Posterior vena cava (tissue), 2 donors: ENCODE measurements at regions of chr19 and their contacts with region 1.

Region 1: DNA sequence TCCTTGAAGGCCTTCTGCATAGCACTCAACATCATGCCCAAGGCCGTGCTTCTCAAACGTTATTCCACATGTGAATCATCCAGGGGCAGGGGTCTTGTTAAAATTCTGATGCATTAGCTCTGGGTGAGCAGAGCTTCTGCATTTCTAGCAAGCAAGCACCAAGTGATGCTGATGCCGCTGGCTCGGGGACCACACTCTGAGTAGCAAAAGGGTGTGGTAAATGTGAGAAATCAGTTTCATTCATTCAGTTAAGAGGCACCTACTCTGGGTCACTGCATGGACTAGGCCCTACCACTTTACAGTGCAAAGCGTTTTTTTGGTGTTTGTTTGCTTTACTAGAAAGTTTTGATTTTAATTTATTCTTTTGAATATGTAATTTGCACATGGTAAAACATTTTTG is 7.2 kb downstream of the KRTDAP start:
- DNase-seq: peak; percentile 31

Region 2: DNA sequence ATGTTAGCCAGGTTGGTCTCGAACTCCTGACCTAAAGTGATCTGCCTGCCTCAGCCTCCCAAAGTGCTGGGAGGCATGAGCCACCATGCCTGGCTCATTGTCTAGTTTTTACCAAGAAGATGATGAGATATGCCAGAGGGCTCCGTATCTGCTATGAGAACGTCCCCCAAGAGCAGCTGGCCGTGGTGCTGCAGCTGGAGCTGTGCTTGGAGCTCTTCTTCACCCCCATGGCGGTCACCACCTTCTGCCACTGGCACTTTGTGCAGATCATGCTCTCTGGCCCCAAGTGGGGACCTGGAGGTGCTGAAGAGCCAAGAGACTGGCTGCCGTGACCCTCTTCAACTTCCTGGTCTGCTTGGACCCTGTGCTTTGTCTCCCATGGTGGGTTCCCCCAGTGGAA is 75.5 kb before region 1 on chr19:
- intact Hi-C with region 1: loop called in 1 of 2 experiments (anchors 2 kb)
- DNase-seq: peak; percentile 60

Region 3: DNA sequence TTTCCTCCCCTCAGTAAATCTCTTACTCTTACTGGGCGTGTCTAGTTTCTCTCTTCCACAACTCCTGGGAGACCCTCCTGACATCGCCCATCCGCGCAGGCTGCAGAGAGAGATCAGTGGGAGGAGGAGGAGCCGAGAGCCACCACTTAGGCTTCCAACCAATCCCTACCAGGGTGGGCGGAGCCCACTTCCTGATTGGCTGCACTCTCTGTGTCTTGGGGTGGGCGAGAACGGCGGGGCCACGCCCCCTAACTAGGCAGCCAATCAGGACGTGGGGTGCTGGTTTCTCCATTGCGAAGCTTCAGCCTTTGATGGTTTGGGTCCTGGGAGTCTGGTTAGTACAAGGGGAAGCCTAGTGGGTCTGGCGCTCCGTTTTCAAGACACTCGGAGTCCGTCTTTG is 102.8 kb after region 1 on chr19 and contains the start of gene PMIS2:
- intact Hi-C with region 1: no loop called
- DNase-seq: no peak
- total RNA-seq, gene PMIS2: not detected